Calu3 (cell line): ENCODE measurements at regions of chr18 and their contacts with region 1.

Region 1: GRCh38 chr18:67515945-67516538 is 478 bp downstream of the DSEL start:
- DNase-seq: peak; percentile 94
- H3K4me3 Mint-ChIP-seq: peak overlapping the region; percentile 85
- H3K27ac Mint-ChIP-seq: peak overlapping the region; percentile 66
- H3K4me1 Mint-ChIP-seq: peaks cover 20% of the 10 kb centered on the region
- H3K27me3 Mint-ChIP-seq: no peaks in the 10 kb centered on the region
- CTCF ChIP-seq: peak; percentile 82

Region 2: DNA sequence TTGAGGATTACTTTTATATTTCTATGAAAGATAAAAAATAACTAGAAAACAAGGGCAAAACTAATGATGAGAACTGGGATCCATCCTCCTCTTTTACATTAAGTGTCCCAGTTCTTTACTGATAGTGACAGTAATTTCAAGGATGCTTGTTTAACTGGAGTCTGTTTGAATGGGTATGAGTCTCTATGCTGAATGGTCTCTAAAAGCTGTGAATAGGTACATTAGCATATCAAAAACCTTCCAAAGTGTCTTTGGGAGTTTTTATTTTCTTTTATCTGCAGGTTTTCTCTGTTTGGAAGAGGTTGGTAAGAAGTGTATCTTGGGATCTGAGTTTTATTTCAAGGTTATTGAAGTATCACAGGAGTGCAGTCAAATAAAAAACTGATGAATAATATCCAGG is 29.5 kb before region 1 on chr18:
- CTCF ChIA-PET with region 1: interaction called, 11 read pairs
- intact Hi-C with region 1: no loop called
- DNase-seq: no peak
- H3K4me3 Mint-ChIP-seq: no peak overlapping the region
- H3K27ac Mint-ChIP-seq: no peak overlapping the region
- H3K4me1 Mint-ChIP-seq: peaks cover 23% of the 10 kb centered on the region
- H3K27me3 Mint-ChIP-seq: no peaks in the 10 kb centered on the region
- CTCF ChIP-seq: no peak

Region 3: GRCh38 chr18:67608615-67609273 is 92.7 kb after region 1 on chr18:
- CTCF ChIA-PET with region 1: no interaction called
- intact Hi-C with region 1: no loop called
- DNase-seq: no peak
- H3K4me3 Mint-ChIP-seq: no peak overlapping the region
- H3K27ac Mint-ChIP-seq: no peak overlapping the region
- H3K4me1 Mint-ChIP-seq: peaks cover 12% of the 10 kb centered on the region
- H3K27me3 Mint-ChIP-seq: no peaks in the 10 kb centered on the region
- CTCF ChIP-seq: no peak

Region 4: GRCh38 chr18:67710639-67711038 is 194.6 kb after region 1 on chr18:
- CTCF ChIA-PET with region 1: interaction called, 3 read pairs
- intact Hi-C with region 1: loop called (anchors 5 kb)
- DNase-seq: peak; percentile 20
- H3K4me3 Mint-ChIP-seq: no peak overlapping the region
- H3K27ac Mint-ChIP-seq: no peak overlapping the region
- H3K4me1 Mint-ChIP-seq: peaks cover 5% of the 10 kb centered on the region
- H3K27me3 Mint-ChIP-seq: no peaks in the 10 kb centered on the region
- CTCF ChIP-seq: peak; percentile 58

Region 5: GRCh38 chr18:67864677-67865340 is 348.8 kb after region 1 on chr18:
- CTCF ChIA-PET with region 1: no interaction called
- intact Hi-C with region 1: loop called (anchors 5 kb)
- DNase-seq: no peak
- H3K4me3 Mint-ChIP-seq: no peak overlapping the region
- H3K27ac Mint-ChIP-seq: no peak overlapping the region
- H3K4me1 Mint-ChIP-seq: peaks cover 9% of the 10 kb centered on the region
- H3K27me3 Mint-ChIP-seq: no peaks in the 10 kb centered on the region
- CTCF ChIP-seq: no peak

Region 6: DNA sequence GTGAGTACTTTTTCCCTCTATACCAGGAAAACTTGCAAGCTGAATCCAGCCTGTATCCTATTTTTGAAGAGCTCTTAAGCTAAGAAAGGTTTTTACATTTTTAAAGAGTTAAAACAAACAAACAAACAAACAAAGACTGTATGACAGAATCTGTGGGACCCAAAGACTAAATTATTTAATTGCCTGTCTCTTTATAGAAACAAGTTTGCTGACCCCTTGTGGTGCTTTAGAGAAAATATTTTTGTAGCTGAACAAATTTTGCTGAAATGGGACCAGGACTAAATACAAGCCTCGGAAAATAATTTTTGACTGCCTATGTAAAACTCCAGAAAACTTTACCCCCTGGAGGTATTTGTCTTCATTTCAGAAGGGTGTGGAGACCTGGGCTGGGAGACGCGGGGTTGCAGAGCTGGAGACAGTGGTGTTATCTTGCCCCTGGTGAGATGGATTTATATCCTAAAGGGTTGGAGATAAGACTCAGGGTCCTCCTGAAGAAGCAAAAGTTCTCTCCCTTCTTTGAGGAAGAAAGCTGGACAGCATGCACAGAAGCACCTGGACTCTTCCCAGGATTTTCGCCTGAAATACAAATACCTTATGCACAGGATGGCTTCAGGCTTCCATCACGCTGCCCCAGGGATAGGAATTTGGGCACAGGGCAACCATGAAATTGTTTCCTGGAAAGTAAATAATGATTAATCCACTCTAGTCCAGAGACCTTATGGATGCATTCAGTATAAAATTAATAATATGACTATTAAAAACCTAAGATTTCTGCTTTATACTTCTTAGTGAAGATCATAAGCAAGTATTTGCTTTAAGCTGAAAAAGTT is 1144.5 kb after region 1 on chr18:
- CTCF ChIA-PET with region 1: interaction called, 4 read pairs
- intact Hi-C with region 1: loop called (anchors 2 kb)
- DNase-seq: no peak
- H3K4me3 Mint-ChIP-seq: no peak overlapping the region
- H3K27ac Mint-ChIP-seq: no peak overlapping the region
- H3K4me1 Mint-ChIP-seq: no peaks in the 10 kb centered on the region
- H3K27me3 Mint-ChIP-seq: no peaks in the 10 kb centered on the region
- CTCF ChIP-seq: peak; percentile 50